ENCODE measurements at regions of chr7 and their contacts with region 1.

Region 1: DNA sequence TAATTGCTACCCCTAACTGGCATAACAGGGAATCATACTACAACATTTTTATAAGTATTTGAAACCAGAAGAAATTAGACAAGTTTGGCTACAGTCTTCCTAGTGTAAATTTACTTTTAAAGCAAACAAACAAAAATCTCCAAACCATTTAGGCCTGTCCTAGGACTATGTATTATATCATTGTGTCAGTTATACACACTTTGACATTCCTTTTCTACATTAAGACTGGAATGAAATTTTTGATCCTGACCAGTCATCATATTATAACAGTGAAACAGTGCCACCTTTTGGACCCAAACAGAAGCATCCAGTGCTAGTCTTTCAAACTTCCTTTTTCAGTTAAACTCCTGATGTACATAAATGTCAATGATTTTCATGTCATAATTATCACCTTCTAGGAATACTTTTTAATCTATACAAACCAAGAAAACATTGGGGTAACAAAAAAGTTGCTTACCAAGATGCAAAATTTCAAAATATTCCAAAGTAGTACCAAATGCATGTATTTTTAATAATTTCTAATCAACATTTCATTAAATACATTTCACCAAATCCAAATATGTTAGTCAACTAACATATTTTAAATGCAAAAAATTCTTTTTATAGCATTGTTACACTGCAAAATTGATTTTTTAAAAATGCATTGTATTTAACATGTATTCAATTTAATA is 75.7 kb downstream of the IMMP2L start:
- DNase-seq: peak; percentile 5
- ATAC-seq: no peak
- H3K4me3 Mint-ChIP-seq: no peak overlapping the region
- H3K27ac Mint-ChIP-seq: no peak overlapping the region
- H3K4me1 Mint-ChIP-seq: no peaks in the 10 kb centered on the region
- H3K27me3 Mint-ChIP-seq: no peaks in the 10 kb centered on the region
- CTCF ChIP-seq: peak; percentile 81

Region 2: GRCh38 chr7:110595690-110596325 is 890.8 kb before region 1 on chr7:
- CTCF ChIA-PET with region 1: no interaction called
- POLR2A ChIA-PET with region 1: no interaction called
- intact Hi-C with region 1: loop called (anchors 10 kb)
- DNase-seq: no peak
- ATAC-seq: peak; percentile 30
- H3K4me3 Mint-ChIP-seq: no peak overlapping the region
- H3K27ac Mint-ChIP-seq: no peak overlapping the region
- H3K4me1 Mint-ChIP-seq: no peaks in the 10 kb centered on the region
- H3K27me3 Mint-ChIP-seq: no peaks in the 10 kb centered on the region
- CTCF ChIP-seq: no peak

Region 3: GRCh38 chr7:111474723-111475418 is 11.7 kb before region 1 on chr7:
- CTCF ChIA-PET with region 1: no interaction called
- POLR2A ChIA-PET with region 1: no interaction called
- intact Hi-C with region 1: no loop called
- DNase-seq: no peak
- ATAC-seq: no peak
- H3K4me3 Mint-ChIP-seq: no peak overlapping the region
- H3K27ac Mint-ChIP-seq: no peak overlapping the region
- H3K4me1 Mint-ChIP-seq: no peaks in the 10 kb centered on the region
- H3K27me3 Mint-ChIP-seq: no peaks in the 10 kb centered on the region
- CTCF ChIP-seq: no peak

Region 4: DNA sequence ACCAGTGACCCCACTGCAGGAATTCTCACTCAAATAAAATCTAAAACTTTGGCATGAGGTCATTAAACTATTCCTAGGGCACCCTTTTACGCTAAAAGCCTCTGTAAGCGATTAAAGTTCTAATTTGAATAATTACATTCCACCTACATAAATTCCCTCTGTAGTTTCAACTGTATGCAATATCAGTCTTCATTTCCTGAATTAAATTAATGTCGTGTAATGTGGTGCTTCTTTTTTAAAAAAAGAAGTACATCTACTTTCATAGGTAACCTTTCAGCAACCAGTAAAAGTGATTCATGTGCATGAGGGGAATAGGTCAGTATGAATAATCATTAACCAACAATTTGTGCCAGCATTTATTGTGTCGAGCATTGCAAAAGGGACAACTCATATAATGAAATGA is 30.9 kb after region 1 on chr7:
- CTCF ChIA-PET with region 1: no interaction called
- POLR2A ChIA-PET with region 1: no interaction called
- intact Hi-C with region 1: no loop called
- DNase-seq: no peak
- ATAC-seq: no peak
- H3K4me3 Mint-ChIP-seq: no peak overlapping the region
- H3K27ac Mint-ChIP-seq: no peak overlapping the region
- H3K4me1 Mint-ChIP-seq: peaks cover 6% of the 10 kb centered on the region
- H3K27me3 Mint-ChIP-seq: no peaks in the 10 kb centered on the region
- CTCF ChIP-seq: no peak